ENCODE measurements at regions of chr6 and their contacts with region 1.

Region 1: DNA sequence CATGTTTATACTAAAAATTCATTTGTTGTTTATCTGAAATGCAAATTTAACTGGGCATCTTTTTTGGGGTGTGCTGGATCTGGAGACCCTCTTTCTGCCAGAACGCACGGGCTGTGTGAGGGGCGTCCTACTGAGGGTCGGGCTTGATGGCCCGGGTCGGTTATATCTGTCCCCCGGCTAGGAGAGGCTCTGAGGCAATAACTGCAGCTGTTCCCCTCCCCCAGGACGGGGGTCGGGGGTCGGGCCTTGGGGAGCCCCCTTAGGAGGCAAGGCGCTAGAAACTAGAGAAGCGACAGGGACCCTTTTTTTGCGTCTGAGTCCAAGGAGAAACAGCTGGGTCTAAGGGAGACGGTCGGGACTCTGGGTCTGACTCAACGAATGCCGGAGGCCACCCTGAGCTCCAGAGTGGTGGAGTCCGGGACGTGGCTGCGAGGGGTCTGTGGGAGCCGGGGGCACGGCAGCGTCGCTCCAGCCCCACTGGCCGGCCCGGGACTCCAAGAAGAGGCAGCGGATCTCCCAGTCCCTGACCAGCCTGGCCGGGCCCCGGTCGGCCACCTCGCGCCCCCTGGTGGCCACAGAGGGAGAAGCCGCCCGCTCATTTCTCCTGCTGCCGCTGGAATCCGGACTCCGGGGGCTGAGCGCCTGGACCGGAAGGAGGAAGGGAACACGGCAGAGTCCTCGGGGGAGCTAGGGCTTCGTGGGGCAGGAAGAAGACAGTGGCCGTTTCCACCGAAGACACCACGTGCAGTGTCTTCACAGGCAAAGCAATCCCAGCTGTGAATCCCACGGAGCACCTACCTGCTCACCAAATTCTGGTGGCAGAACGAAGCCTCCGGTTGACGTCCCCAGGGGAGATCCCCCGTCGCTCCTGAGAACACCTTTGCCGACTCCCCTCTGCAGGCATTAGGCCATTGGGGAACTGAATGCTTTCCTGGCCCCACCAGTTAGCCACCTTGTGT is 24.0 kb upstream of the SCML4 start:
- DNase-seq: peak; percentile 88
- H3K4me3 Mint-ChIP-seq: peak overlapping the region; percentile 75
- H3K27ac Mint-ChIP-seq: no peak overlapping the region
- H3K4me1 Mint-ChIP-seq: peaks cover 27% of the 10 kb centered on the region
- H3K27me3 Mint-ChIP-seq: no peaks in the 10 kb centered on the region

Region 2: DNA sequence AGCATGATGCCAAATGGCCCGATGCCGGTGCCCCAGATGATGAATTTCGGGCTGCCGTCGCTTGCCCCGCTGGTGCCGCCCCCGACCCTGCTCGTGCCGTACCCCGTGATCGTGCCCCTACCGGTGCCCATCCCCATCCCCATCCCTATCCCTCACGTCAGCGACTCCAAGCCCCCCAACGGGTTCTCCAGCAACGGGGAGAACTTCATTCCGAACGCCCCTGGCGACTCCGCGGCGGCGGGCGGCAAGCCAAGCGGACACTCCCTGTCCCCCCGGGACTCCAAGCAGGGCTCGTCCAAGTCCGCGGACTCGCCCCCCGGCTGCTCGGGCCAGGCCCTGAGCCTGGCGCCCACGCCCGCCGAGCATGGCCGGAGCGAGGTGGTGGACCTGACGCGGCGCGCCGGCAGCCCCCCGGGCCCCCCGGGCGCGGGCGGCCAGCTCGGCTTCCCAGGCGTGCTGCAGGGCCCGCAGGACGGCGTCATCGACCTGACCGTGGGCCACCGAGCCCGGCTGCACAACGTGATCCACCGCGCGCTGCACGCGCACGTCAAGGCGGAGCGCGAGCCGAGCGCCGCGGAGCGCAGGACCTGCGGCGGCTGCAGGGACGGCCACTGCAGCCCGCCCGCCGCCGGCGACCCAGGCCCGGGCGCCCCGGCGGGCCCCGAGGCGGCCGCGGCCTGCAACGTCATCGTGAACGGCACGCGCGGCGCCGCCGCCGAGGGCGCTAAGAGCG is 213.6 kb before region 1 on chr6:
- CTCF ChIA-PET with region 1: no interaction called
- POLR2A ChIA-PET with region 1: no interaction called
- intact Hi-C with region 1: no loop called
- DNase-seq: no peak
- H3K4me3 Mint-ChIP-seq: peak overlapping the region; percentile 35
- H3K27ac Mint-ChIP-seq: no peak overlapping the region
- H3K4me1 Mint-ChIP-seq: peaks cover 4% of the 10 kb centered on the region
- H3K27me3 Mint-ChIP-seq: peaks cover 61% of the 10 kb centered on the region

Region 3: DNA sequence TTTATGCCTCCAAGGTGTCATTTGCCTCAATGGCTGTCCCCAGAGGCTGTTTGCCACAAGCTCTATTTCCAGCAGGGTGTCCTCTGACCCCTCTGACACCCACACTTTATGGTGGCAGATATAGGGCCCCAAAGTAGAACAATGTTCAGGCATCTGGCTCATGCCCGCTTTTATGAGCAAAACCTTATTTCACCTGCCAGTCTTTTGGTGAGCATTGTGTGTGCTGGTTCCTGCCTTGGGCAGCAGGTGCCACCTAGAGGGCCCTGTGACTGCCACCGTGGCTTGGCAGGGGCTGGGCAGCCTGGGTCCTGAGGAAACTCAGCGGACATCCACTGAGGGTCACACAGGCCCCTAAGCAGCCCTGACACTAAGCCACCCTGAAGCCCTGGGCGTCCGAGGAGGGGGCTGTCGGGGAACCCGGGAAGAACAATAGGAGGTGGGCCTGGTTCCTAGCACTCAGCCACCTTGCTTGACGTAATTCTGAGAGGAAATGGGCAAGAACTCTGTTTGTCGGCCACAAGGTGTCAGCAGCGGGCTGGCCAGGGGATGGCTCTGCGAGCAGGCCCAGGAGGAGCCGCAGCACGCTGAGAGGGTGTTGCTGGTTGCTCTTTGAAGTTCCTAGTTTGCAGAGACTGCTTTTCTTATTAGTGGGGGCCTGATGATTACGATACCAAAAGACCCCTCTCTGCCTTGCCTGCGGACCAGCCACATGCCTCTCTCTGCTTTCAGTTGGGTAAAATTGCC is 173.0 kb before region 1 on chr6:
- CTCF ChIA-PET with region 1: interaction called, 99 read pairs
- POLR2A ChIA-PET with region 1: no interaction called
- intact Hi-C with region 1: loop called (anchors 1 kb)
- DNase-seq: peak; percentile 91
- H3K4me3 Mint-ChIP-seq: peak overlapping the region; percentile 57
- H3K27ac Mint-ChIP-seq: peak overlapping the region; percentile 69
- H3K4me1 Mint-ChIP-seq: peaks cover 12% of the 10 kb centered on the region
- H3K27me3 Mint-ChIP-seq: no peaks in the 10 kb centered on the region

Region 4: GRCh38 chr6:107716688-107717089 is 131.4 kb before region 1 on chr6:
- CTCF ChIA-PET with region 1: interaction called, 21 read pairs
- POLR2A ChIA-PET with region 1: interaction called, 5 read pairs
- intact Hi-C with region 1: no loop called
- DNase-seq: peak; percentile 86
- H3K4me3 Mint-ChIP-seq: peak overlapping the region; percentile 64
- H3K27ac Mint-ChIP-seq: peak overlapping the region; percentile 84
- H3K4me1 Mint-ChIP-seq: peaks cover 70% of the 10 kb centered on the region
- H3K27me3 Mint-ChIP-seq: no peaks in the 10 kb centered on the region

Region 5: GRCh38 chr6:107786709-107787588 is 61.2 kb before region 1 on chr6:
- CTCF ChIA-PET with region 1: interaction called, 22 read pairs
- POLR2A ChIA-PET with region 1: interaction called, 4 read pairs
- intact Hi-C with region 1: no loop called
- DNase-seq: peak; percentile 51
- H3K4me3 Mint-ChIP-seq: peak overlapping the region; percentile 40
- H3K27ac Mint-ChIP-seq: peak overlapping the region; percentile 28
- H3K4me1 Mint-ChIP-seq: peaks cover 74% of the 10 kb centered on the region
- H3K27me3 Mint-ChIP-seq: no peaks in the 10 kb centered on the region

Region 6: GRCh38 chr6:107806691-107807090 is 41.4 kb before region 1 on chr6:
- CTCF ChIA-PET with region 1: interaction called, 17 read pairs
- POLR2A ChIA-PET with region 1: no interaction called
- intact Hi-C with region 1: no loop called
- DNase-seq: no peak
- H3K4me3 Mint-ChIP-seq: no peak overlapping the region
- H3K27ac Mint-ChIP-seq: no peak overlapping the region
- H3K4me1 Mint-ChIP-seq: peaks cover 67% of the 10 kb centered on the region
- H3K27me3 Mint-ChIP-seq: no peaks in the 10 kb centered on the region

Region 7: DNA sequence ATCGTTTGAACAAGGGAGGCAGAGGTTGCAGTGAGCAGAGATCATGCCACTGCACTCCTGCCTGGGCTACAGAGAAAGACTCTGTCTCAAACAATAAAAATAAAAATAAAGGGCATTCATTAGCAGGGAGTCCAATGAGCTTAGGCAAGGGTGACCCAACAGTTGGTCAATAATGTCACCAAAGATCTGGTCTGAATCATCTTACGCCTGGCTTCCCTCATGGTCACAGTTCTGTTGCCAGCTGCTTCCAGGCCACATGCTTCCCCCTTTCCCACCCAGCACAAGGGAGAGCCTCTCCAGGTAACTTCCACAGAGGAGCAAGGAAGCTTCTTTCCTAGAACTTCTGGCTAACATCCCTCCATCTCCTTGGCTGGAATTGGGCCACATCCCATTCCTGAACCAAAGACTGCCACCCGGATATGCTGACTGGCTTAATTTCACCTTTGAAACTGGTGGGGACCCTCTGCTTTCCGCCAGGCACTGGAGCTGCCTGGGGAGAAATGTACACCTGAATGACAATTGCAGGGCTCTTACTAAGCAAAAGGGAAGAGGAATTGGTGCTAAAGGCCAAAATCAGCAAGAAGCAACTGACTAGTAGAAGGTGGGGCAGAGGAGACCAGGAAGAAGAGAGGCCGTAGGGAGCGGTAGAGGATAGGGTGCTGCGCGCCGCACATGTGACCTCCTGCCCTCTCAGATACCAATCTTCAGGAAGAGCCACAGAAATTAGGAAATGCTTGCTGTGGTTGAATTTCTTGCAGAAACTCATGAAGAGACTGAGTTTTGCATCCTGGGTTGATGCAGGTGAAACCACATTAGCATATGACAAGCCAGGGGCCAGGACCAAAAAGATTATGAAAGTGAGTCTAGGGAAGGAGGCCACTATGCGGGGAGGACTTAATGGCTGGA is 15.7 kb before region 1 on chr6:
- CTCF ChIA-PET with region 1: interaction called, 26 read pairs
- POLR2A ChIA-PET with region 1: interaction called, 4 read pairs
- intact Hi-C with region 1: no loop called
- DNase-seq: no peak
- H3K4me3 Mint-ChIP-seq: no peak overlapping the region
- H3K27ac Mint-ChIP-seq: no peak overlapping the region
- H3K4me1 Mint-ChIP-seq: peaks cover 38% of the 10 kb centered on the region
- H3K27me3 Mint-ChIP-seq: no peaks in the 10 kb centered on the region